Calu3 (cell line): ENCODE measurements at regions of chr5 and their contacts with region 1.

Region 1: GRCh38 chr5:57494104-57495098 is 11.8 kb upstream of the ACTBL2 start:
- DNase-seq: peak; percentile 93
- H3K4me3 Mint-ChIP-seq: peak overlapping the region; percentile 51
- H3K27ac Mint-ChIP-seq: peak overlapping the region; percentile 96
- H3K4me1 Mint-ChIP-seq: peaks cover 69% of the 10 kb centered on the region
- H3K27me3 Mint-ChIP-seq: no peaks in the 10 kb centered on the region
- CTCF ChIP-seq: no peak

Region 2: DNA sequence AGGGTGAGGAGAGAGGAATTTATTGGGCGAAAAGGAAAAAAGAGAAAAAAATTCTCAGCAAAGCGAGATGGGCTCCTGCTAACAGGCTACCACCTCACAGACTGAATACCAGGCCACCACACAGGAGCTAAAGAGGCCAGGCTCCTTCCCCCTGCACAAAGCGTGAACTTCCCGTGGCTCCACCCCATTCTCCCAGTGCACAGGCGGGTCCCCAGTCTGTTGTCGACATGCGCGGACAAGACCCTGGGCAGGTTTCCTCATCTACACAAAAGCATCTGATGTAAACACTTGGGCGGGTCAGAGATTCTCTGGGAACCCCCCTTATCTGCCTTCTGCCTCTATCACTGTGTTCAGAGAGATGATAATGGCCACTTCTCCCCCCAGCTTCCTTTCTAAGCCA is 1609.0 kb before region 1 on chr5:
- CTCF ChIA-PET with region 1: no interaction called
- intact Hi-C with region 1: no loop called
- DNase-seq: no peak
- H3K4me3 Mint-ChIP-seq: no peak overlapping the region
- H3K27ac Mint-ChIP-seq: no peak overlapping the region
- H3K4me1 Mint-ChIP-seq: peaks cover 34% of the 10 kb centered on the region
- H3K27me3 Mint-ChIP-seq: no peaks in the 10 kb centered on the region
- CTCF ChIP-seq: no peak

Region 3: DNA sequence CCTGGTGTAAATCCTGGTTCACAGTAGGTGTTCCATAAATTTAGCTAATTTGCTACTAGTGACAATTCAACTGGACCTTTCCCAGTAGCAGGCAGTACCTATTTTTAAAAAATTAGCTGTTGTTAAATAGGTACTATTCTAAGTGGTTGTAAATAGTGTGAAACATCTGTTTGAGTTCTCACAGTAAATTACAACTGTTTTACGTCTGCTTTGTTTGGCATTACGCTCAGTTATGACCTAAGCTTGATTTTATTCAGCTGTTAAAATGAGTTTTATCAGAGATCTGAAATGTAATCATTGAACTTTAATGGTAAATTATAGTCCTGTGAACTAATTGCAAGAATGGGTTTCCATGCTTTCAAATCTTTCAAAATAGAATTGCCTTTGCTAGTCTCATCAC is 226.6 kb before region 1 on chr5:
- CTCF ChIA-PET with region 1: no interaction called
- intact Hi-C with region 1: no loop called
- DNase-seq: no peak
- H3K4me3 Mint-ChIP-seq: no peak overlapping the region
- H3K27ac Mint-ChIP-seq: no peak overlapping the region
- H3K4me1 Mint-ChIP-seq: no peaks in the 10 kb centered on the region
- H3K27me3 Mint-ChIP-seq: no peaks in the 10 kb centered on the region
- CTCF ChIP-seq: no peak

Region 4: DNA sequence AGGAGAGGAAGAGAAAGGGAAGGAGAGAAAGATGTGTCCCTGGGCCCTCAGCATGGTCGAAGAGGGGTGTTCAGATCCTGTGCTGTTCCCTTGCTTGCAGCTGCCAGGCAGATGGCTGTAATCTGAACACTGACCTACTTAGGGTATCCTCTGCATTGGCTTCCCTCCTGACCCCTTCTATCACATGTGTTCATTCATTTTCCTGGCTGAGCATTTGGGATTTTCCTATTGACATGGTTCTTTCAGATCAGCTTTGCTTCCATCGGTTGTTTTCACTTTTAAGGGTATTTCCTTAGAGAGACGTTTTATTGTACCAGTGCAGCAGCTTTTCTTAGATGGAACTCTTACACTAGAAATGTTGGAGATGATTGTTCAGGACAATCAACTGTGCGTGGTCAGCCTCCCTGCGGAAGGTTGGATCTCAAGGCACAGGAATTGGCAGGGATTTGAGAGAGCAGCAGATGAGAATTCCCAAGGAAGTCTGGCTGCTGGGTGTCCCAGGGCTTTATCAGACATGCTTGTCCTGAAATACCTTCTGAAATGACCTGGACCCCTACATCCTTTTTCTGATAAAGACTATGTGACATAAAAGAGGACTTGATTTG is 37.8 kb before region 1 on chr5:
- CTCF ChIA-PET with region 1: interaction called, 3 read pairs
- intact Hi-C with region 1: loop called (anchors 2 kb)
- DNase-seq: peak; percentile 6
- H3K4me3 Mint-ChIP-seq: peak overlapping the region; percentile 6
- H3K27ac Mint-ChIP-seq: peak overlapping the region; percentile 71
- H3K4me1 Mint-ChIP-seq: peaks cover 54% of the 10 kb centered on the region
- H3K27me3 Mint-ChIP-seq: no peaks in the 10 kb centered on the region
- CTCF ChIP-seq: no peak

Region 5: DNA sequence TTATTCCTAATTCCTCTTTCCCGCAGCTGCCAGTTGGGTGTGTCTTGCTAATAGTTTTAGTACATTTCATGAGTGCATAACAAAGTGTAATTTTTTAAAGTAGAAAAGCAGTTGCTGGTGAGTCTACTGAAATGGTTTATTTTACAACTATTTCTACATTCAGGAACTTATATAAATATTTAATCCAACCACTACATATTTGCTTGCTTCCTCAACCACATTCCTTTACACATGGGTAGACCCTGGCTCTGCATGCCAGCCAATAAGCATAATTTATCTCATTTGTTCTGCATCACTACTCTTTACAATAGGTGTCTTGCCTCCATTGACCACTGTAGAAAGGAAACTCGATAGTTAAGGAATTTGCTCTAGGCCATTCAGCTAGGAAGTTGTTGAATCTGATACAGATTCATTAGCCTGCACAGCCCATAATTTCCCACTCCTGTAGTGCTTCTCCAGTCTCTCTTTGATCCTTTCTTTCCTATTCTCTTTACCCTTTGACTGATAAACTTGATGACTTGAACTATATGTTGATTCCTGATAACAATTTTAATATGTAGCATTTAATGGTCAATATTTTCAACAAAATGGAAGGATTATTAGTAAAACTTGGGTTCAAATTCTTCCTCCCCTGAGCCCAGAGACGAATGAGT is 330.8 kb after region 1 on chr5:
- CTCF ChIA-PET with region 1: no interaction called
- intact Hi-C with region 1: loop called (anchors 2 kb)
- DNase-seq: peak; percentile 47
- H3K4me3 Mint-ChIP-seq: peak overlapping the region; percentile 24
- H3K27ac Mint-ChIP-seq: peak overlapping the region; percentile 80
- H3K4me1 Mint-ChIP-seq: peaks cover 40% of the 10 kb centered on the region
- H3K27me3 Mint-ChIP-seq: no peaks in the 10 kb centered on the region
- CTCF ChIP-seq: no peak